ENCODE measurements at regions of chr19 and their contacts with region 1.

Region 1: GRCh38 chr19:14432791-14433553 is at the start of gene PKN1:
- DNase-seq: no peak
- H3K4me3 ChIP-seq: peak within 1 kb of the TSS; percentile 70
- CTCF ChIP-seq: peak; percentile 2

Region 2: DNA sequence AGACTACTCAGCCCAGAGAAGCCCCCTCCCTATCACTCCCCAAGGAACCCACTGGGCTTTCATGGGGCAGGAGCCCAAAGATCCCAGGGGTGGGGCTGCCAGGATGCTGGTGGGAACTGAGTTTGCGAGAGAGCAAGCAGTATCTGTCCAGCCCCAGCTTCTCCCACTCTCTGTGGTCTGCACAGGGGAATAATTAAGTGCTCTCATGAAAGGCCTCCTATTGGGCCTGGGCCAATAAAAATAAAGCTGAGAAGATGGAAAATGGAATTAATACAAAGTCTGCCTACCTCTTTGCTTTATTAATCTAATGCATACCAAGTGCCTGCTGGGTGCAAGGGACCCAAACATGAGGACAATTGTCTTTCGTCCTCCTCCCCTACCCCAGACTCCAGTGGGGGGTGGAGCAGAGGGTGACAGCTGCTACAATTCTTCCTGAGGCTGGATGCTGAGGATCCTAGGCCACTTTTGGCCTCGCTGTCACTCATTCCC is 19.2 kb before region 1 on chr19:
- CTCF ChIA-PET with region 1: interaction called, 45 read pairs
- POLR2A ChIA-PET with region 1: no interaction called
- DNase-seq: no peak
- H3K4me3 ChIP-seq: no peak overlapping the region
- CTCF ChIP-seq: no peak

Region 3: DNA sequence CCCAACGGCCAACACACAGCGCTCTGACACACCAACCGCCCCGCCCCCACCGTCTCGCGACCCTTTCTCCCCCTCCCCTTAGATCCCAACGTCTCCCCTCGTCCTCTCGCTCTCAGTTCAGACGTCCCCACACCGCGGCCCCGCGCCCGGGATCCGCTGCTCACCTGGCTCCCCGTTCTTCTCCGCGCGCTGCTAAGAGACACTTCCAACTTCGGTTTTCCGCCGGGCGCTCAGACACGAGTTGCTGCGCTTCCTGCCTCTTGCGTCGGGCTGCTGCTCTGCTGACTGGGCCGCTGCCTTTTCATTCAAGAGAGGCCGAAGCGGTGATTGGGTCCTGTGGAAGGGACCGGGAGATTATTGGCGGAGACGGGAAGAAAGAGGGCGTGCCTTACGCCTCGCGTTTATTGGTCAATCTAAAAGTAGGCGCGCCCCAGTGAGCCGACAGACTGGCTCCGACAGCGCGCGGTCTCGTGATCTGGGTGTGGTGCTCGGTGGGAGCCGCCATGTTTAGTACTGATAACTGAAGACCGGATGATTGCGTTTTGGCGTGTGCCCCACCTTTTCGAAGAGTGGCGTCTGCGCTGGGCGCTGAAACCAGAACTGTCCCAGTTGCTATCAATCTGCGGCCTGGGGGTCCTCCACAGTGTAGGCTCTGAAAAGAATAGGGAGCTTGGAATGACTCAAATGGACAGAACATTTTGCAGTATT is 13.7 kb before region 1 on chr19 and contains the start of gene DDX39A:
- CTCF ChIA-PET with region 1: interaction called, 45 read pairs
- POLR2A ChIA-PET with region 1: interaction called, 3 read pairs
- DNase-seq: peak; percentile 95
- H3K4me3 ChIP-seq: peak within 1 kb of the TSS; percentile 87
- CTCF ChIP-seq: no peak

Measured in AG04449 (cell line).